Activated CD4-positive, alpha-beta T cell treated with anti-CD3 and anti-CD28 coated beads for 36 hours (primary cell): ENCODE measurements at regions of chr3 and their contacts with region 1.

Region 1: GRCh38 chr3:171088496-171088895 is 62.0 kb upstream of the SLC2A2 start:
- DNase-seq: no peak
- ATAC-seq: no peak
- H3K4me3 Mint-ChIP-seq: no peak overlapping the region
- H3K27ac Mint-ChIP-seq: no peak overlapping the region
- H3K4me1 Mint-ChIP-seq: no peaks in the 10 kb centered on the region
- H3K27me3 Mint-ChIP-seq: no peaks in the 10 kb centered on the region

Region 2: GRCh38 chr3:171028025-171028778 is 60.3 kb before region 1 on chr3:
- CTCF ChIA-PET with region 1: no interaction called
- POLR2A ChIA-PET with region 1: interaction called, 3 read pairs
- intact Hi-C with region 1: loop called in 1 of 2 experiments (anchors 2 kb)
- DNase-seq: peak; percentile 83
- ATAC-seq: peak; percentile 89
- H3K4me3 Mint-ChIP-seq: no peak overlapping the region
- H3K27ac Mint-ChIP-seq: no peak overlapping the region
- H3K4me1 Mint-ChIP-seq: peaks cover 2% of the 10 kb centered on the region
- H3K27me3 Mint-ChIP-seq: peaks cover 20% of the 10 kb centered on the region